ENCODE measurements at regions of chr4 and their contacts with region 1.

Region 1: GRCh38 chr4:107996949-107997788 is 7.5 kb downstream of the HADH start:
- DNase-seq: peak; percentile 84
- H3K4me3 ChIP-seq: no peak overlapping the region
- H3K27ac ChIP-seq: peak overlapping the region; percentile 69 to 96 (median 83)
- H3K4me1 ChIP-seq: peaks cover 0 to 66% (median 53%) of the 10 kb centered on the region in 4 donors
- H3K27me3 ChIP-seq: no peaks in the 10 kb centered on the region
- CTCF ChIP-seq: no peak
- EP300 ChIP-seq: peak; percentile 53 to 84 (median 73)
- POLR2A ChIP-seq: no peak

Region 2: DNA sequence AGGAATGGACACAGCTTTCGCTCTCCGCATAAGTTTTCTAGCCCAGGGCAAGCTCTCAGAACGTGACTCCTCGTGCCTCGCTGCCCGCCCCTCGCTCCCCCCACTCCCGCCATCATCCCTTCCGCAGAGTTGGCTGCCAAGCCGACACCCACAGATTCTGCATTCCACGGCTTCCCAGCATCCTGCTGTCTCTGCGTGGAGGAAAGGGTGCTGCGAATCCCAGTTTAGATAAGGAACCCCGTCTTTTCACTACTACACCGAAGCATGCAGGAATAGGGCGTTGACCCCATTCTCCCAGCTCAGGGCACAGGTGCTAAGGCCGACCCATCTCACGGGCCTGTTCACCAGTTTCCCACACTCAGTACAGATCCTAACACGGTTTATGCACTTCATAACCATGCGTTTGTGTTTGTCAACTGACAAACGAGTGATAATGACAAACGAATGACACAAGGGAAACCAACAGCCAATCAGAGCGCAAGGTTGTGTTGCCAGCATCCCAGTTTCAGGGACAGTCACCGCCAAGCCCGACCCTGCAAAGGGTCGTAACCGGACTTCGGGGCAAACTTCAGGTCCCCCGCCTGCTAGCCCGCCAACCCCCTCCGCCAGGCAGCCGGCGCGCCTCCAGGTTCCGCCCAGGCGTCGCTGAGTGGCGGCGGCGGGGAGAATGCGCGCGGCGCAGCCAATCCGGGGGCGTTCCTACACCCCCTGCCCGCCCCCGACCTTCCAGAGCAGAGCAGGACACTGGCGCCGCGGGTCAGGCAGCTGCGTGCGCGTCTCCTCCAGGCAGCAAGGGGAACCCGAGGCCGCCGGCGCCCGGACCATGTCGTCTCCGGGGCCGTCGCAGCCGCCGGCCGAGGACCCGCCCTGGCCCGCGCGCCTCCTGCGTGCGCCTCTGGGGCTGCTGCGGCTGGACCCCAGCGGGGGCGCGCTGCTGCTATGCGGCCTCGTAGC is 66.1 kb before region 1 on chr4 and contains the start of gene CYP2U1:
- intact Hi-C with region 1: loop called (anchors 2 kb)
- DNase-seq: peak; percentile 95
- H3K4me3 ChIP-seq: peak within 1 kb of the TSS; percentile 70 to 80 (median 76)
- H3K27ac ChIP-seq: peak within 1 kb of the TSS; percentile 81 to 88 (median 87)
- H3K4me1 ChIP-seq: peaks cover 0 to 31% (median 18%) of the 10 kb centered on the region in 4 donors
- H3K27me3 ChIP-seq: no peaks in the 10 kb centered on the region
- CTCF ChIP-seq: peak in 1 of 4 experiments; percentile 12
- EP300 ChIP-seq: no peak
- POLR2A ChIP-seq: peak; percentile 19 to 41
- total RNA-seq, gene CYP2U1: 11.9 to 16.1 (median 15.2) TPM

Region 3: DNA sequence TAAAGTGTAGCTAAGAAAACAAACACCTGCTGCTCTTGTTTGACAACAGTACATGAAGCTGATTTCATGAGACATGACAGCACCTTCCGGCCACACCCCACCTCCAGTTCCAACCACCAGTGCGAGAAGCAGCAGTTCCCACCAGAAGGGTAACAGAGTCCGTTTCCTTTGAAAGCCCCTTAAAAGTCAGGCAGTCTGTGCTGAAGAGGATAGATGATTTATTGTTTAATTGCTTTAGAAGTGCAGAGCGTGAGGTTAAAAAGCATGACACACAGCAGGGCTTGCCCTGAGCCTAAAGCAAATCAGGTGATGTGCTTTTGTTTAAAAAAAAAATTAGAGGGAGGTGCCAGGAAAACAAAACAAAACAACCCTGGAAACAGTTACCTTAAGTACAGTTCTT is 75.1 kb after region 1 on chr4:
- intact Hi-C with region 1: no loop called
- DNase-seq: no peak
- H3K4me3 ChIP-seq: no peak overlapping the region
- H3K27ac ChIP-seq: no peak overlapping the region
- H3K4me1 ChIP-seq: peaks cover 0 to 5% (median 0%) of the 10 kb centered on the region in 4 donors
- H3K27me3 ChIP-seq: peaks cover 0 to 4% (median 0%) of the 10 kb centered on the region in 3 donors
- CTCF ChIP-seq: no peak
- EP300 ChIP-seq: no peak
- POLR2A ChIP-seq: no peak